ENCODE measurements at regions of chr3 and their contacts with region 1.

Region 1: GRCh38 chr3:56801662-56802377 is at the start of gene ARHGEF3:
- DNase-seq: no peak
- H3K4me3 ChIP-seq: peak within 1 kb of the TSS; percentile 69
- H3K27ac ChIP-seq: no peak within 1 kb of the TSS
- H3K27me3 ChIP-seq: peaks cover 4% of the 10 kb centered on the region
- CTCF ChIP-seq: peak; percentile 39
- polyA plus RNA-seq, gene ARHGEF3: 4.9 and 5.6 TPM in 2 replicates

Region 2: GRCh38 chr3:56711344-56711743 is 90.5 kb before region 1 on chr3:
- CTCF ChIA-PET with region 1: interaction called, 179 read pairs
- POLR2A ChIA-PET with region 1: no interaction called
- DNase-seq: no peak
- H3K4me3 ChIP-seq: no peak overlapping the region
- H3K27ac ChIP-seq: no peak overlapping the region
- H3K27me3 ChIP-seq: peaks cover 6% of the 10 kb centered on the region
- CTCF ChIP-seq: no peak

Region 3: DNA sequence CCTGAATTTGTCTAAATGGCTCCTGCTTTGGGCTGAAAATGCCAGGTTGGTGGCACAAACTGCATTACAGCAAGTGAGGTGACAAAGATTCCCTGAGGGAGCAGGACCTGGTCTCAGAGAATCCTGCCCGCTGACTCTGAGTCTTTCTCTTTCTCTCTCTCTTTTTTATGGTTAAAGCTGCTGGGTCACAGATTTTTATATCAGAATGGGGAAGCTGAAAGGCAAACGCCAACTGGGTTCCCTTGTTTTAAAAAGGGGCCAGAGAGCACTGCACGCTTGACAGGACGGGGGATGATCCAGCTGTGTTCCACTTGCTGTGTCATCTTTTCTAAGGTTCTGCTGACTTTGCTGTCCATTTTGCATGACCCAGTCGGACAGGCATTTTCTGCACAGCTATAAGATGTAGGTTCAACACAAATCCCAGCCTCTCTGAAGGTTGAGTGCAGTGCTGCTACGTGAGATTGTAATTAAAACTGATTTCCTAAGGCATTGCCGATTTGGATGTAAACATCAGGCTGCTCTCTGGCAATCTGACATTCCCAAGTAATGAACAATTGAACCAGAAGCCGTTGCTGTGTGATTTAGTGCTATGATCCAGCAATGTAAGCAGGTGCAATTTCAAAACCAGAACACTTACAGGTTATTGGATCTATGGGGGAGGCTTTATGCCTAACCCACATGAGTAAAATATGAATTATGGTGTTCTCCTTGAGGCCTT is 25.8 kb before region 1 on chr3:
- CTCF ChIA-PET with region 1: interaction called, 89 read pairs
- POLR2A ChIA-PET with region 1: no interaction called
- DNase-seq: no peak
- H3K4me3 ChIP-seq: no peak overlapping the region
- H3K27ac ChIP-seq: no peak overlapping the region
- H3K27me3 ChIP-seq: peaks cover 3% of the 10 kb centered on the region
- CTCF ChIP-seq: no peak

Region 4: GRCh38 chr3:56812754-56813650 is 11.2 kb after region 1 on chr3:
- CTCF ChIA-PET with region 1: interaction called, 68 read pairs
- POLR2A ChIA-PET with region 1: no interaction called
- DNase-seq: no peak
- H3K4me3 ChIP-seq: no peak overlapping the region
- H3K27ac ChIP-seq: no peak overlapping the region
- H3K27me3 ChIP-seq: peaks cover 4% of the 10 kb centered on the region
- CTCF ChIP-seq: no peak

Region 5: DNA sequence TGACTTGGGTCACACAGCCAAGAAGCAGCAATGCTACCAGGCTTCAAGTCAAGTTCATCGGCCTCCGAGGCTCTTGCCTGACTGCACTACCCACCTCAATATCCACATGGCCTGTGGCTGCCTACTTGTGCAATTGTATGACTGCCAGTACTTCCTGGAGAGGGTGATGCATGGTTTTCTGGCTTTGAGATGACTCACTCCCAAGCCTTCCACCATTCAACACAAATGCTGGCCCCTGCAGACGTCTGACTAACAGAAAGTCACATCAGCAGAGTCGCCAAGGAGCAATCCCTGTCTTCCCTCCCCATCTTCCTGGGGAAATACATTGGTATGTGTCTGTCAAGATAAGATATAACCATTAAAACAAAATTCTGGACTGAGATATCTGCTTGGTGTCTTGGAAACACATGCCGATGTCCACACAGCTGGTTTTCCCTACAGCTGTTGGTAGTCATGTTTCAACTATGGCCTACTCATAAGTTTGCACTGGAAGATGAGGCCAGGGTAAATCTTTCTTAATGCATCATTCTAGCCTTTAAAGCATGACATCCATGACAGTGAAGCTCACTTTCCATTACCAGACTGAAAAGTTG is 179.1 kb after region 1 on chr3:
- CTCF ChIA-PET with region 1: interaction called, 23 read pairs
- POLR2A ChIA-PET with region 1: no interaction called
- DNase-seq: peak; percentile 88
- H3K4me3 ChIP-seq: no peak overlapping the region
- H3K27ac ChIP-seq: peak overlapping the region; percentile 59
- H3K27me3 ChIP-seq: no peaks in the 10 kb centered on the region
- CTCF ChIP-seq: no peak

Region 6: DNA sequence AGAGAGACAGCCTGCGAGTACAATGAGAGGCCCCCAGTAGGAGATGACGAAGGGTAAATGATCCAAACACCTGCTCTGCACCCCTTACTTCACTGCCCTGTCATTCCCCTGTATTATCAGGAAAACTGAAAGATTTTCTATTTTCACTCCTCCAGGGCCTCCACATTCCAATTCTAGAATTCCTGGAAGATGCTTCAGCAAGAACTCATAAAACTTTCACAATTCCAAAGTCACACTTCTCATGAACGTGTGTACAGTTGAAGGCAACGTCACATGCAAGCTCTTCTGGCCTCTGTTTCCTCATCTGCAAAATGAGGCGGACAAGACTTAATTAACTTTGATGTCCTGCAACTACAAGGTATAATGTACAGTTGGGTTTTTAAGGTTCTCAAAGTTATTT is 195.9 kb after region 1 on chr3:
- CTCF ChIA-PET with region 1: interaction called, 25 read pairs
- POLR2A ChIA-PET with region 1: no interaction called
- DNase-seq: no peak
- H3K4me3 ChIP-seq: no peak overlapping the region
- H3K27ac ChIP-seq: no peak overlapping the region
- H3K27me3 ChIP-seq: no peaks in the 10 kb centered on the region
- CTCF ChIP-seq: no peak

Region 7: DNA sequence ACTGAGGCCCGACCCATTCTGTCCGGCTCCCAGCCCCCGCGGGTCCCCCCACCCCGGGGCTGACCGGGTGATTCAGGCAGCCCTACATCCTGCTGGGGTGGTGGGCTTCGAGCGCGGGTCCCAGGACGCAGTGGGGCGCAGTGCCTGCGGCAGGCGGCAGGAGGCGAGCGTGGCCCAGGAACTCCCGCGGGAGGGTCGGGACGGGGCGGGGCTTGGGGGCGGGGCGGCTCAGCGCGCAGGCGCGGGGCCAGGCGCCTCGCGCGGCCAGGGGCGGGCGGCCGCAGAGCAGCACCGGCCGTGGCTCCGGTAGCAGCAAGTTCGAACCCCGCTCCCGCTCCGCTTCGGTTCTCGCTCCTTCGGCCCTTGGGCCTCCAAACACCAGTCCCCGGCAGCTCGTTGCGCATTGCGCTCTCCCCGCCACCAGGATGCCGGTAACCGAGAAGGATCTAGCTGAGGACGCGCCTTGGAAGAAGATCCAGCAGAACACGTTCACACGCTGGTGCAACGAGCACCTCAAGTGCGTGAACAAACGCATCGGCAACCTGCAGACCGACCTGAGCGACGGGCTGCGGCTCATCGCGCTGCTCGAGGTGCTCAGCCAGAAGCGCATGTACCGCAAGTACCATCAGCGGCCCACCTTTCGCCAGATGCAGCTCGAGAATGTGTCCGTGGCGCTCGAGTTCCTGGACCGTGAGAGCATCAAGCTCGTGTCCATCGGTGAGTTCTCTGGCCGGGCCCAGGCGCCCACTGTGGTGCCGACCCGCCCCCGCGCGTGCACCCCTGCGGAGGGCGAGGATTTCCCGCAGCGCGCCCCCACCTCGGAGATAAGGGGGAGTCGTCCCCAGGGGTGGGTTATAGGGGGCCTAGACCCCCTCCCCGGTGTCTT is 1206.6 kb after region 1 on chr3 and contains the start of gene FLNB:
- CTCF ChIA-PET with region 1: no interaction called
- POLR2A ChIA-PET with region 1: no interaction called
- DNase-seq: no peak
- H3K4me3 ChIP-seq: peak within 1 kb of the TSS; percentile 100
- H3K27ac ChIP-seq: peak within 1 kb of the TSS; percentile 52
- H3K27me3 ChIP-seq: no peaks in the 10 kb centered on the region
- CTCF ChIP-seq: peak; percentile 74
- polyA plus RNA-seq, gene FLNB: 89.6 and 90.4 TPM in 2 replicates

Measured in AG04450 (cell line).